ENCODE measurements at regions of chr6 and their contacts with region 1.

Region 1: GRCh38 chr6:56637640-56638039 is 5.0 kb downstream of the DST start:
- DNase-seq: peak; percentile 46
- H3K4me3 ChIP-seq: peak overlapping the region; percentile 69 to 94 (median 85)
- H3K27ac ChIP-seq: peak overlapping the region; percentile 96
- H3K4me1 ChIP-seq: peaks cover 17% of the 10 kb centered on the region
- H3K27me3 ChIP-seq: no peaks in the 10 kb centered on the region
- CTCF ChIP-seq: peak; percentile 50 to 59

Region 2: GRCh38 chr6:56659721-56660380 is 22.2 kb after region 1 on chr6:
- CTCF ChIA-PET with region 1: no interaction called
- dilution Hi-C with region 1: no loop called
- in situ Hi-C with region 1: no loop called
- intact Hi-C with region 1: loop called (anchors 1 kb)
- DNase-seq: no peak
- H3K4me3 ChIP-seq: peak overlapping the region in 1 of 3 experiments; percentile 4
- H3K27ac ChIP-seq: peak overlapping the region; percentile 90
- H3K4me1 ChIP-seq: peaks cover 66% of the 10 kb centered on the region
- H3K27me3 ChIP-seq: no peaks in the 10 kb centered on the region
- CTCF ChIP-seq: no peak

Region 3: GRCh38 chr6:56699066-56699654 is 61.5 kb after region 1 on chr6:
- CTCF ChIA-PET with region 1: interaction called, 12 read pairs
- dilution Hi-C with region 1: no loop called
- in situ Hi-C with region 1: loop called in 1 of 2 experiments (anchors 10 kb)
- intact Hi-C with region 1: loop called (anchors 1 kb)
- DNase-seq: no peak
- H3K4me3 ChIP-seq: no peak overlapping the region
- H3K27ac ChIP-seq: no peak overlapping the region
- H3K4me1 ChIP-seq: peaks cover 8% of the 10 kb centered on the region
- H3K27me3 ChIP-seq: no peaks in the 10 kb centered on the region
- CTCF ChIP-seq: peak; percentile 44 to 53

Region 4: DNA sequence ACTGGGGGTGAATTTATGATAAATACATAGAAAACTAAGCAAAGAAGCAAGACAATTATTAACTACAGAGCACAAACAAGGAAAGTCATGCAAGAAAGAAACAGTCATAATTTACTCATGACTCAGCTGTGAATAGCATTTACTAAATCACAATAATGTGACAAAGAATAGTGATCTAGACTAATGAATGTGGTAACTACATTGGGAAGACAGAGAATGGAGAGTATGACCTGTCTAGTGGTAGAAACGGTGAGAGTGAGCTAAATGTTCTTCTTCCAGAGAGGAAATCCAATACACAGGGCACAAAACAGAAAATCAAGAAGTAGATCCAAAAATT is 158.5 kb after region 1 on chr6:
- CTCF ChIA-PET with region 1: no interaction called
- dilution Hi-C with region 1: no loop called
- in situ Hi-C with region 1: no loop called
- intact Hi-C with region 1: no loop called
- DNase-seq: peak; percentile 60
- H3K4me3 ChIP-seq: no peak overlapping the region
- H3K27ac ChIP-seq: peak overlapping the region; percentile 6
- H3K4me1 ChIP-seq: peaks cover 16% of the 10 kb centered on the region
- H3K27me3 ChIP-seq: no peaks in the 10 kb centered on the region
- CTCF ChIP-seq: no peak

Region 5: GRCh38 chr6:56843573-56844349 is 206.1 kb after region 1 on chr6:
- CTCF ChIA-PET with region 1: no interaction called
- dilution Hi-C with region 1: no loop called
- in situ Hi-C with region 1: loop called in 1 of 2 experiments (anchors 25 kb)
- intact Hi-C with region 1: no loop called
- DNase-seq: peak; percentile 81
- H3K4me3 ChIP-seq: peak overlapping the region; percentile 70 to 82 (median 73)
- H3K27ac ChIP-seq: peak overlapping the region; percentile 36
- H3K4me1 ChIP-seq: peaks cover 20% of the 10 kb centered on the region
- H3K27me3 ChIP-seq: no peaks in the 10 kb centered on the region
- CTCF ChIP-seq: peak; percentile 49 to 73

Measured in mammary epithelial cell (primary cell).